Stomach (tissue), 19 donors: ENCODE measurements at regions of chr9 and their contacts with region 1.

Region 1: GRCh38 chr9:14198841-14199455 is 115.0 kb downstream of the NFIB start:
- DNase-seq: peak; percentile 60 to 64
- H3K4me3 ChIP-seq: no peak overlapping the region
- H3K27ac ChIP-seq: peak overlapping the region; percentile 26 to 73 (median 56)
- H3K4me1 ChIP-seq: peaks cover 13 to 86% (median 47%) of the 10 kb centered on the region in 4 donors
- H3K27me3 ChIP-seq: no peaks in the 10 kb centered on the region
- CTCF ChIP-seq: no peak
- EP300 ChIP-seq: no peak
- POLR2A ChIP-seq: no peak

Region 2: DNA sequence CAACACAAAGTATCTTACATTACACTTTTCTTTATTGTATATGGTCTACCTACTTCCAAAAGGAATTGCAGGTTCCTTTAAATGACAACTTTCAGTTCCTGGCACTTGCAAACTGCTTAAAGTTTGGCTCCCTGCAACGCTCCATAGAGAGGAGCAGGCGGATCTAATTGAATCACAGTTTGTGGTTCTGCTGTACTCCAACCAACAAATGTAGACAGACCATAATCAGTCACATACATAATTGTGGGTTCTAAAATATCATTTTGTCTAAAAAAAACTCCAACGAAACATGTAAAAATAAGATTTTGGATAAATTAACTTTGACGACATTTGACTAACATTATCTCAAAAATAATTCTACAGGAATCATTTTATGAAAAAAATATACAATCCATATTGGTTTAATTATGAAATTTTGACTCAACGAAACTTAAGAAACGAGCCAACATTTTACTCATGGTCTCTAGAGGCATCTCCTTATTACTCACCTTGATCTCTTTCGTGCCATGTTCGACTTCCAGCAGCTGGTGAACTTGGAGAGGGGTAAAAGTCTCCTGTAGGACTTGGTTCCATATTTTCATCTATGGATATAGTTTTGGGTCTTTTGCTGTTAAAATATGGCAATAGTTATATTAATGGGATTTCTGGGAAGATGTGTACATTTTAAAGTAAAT is 52.6 kb before region 1 on chr9:
- intact Hi-C with region 1: no loop called
- DNase-seq: no peak
- H3K4me3 ChIP-seq: no peak overlapping the region
- H3K27ac ChIP-seq: no peak overlapping the region
- H3K4me1 ChIP-seq: peaks cover 0 to 4% (median 1%) of the 10 kb centered on the region in 4 donors
- H3K27me3 ChIP-seq: no peaks in the 10 kb centered on the region
- CTCF ChIP-seq: no peak
- EP300 ChIP-seq: no peak
- POLR2A ChIP-seq: no peak

Region 3: GRCh38 chr9:14245901-14246525 is 47.1 kb after region 1 on chr9:
- intact Hi-C with region 1: loop called (anchors 10 kb)
- DNase-seq: no peak
- H3K4me3 ChIP-seq: no peak overlapping the region
- H3K27ac ChIP-seq: no peak overlapping the region
- H3K4me1 ChIP-seq: peaks cover 7 to 88% (median 41%) of the 10 kb centered on the region in 4 donors
- H3K27me3 ChIP-seq: no peaks in the 10 kb centered on the region
- CTCF ChIP-seq: no peak
- EP300 ChIP-seq: no peak
- POLR2A ChIP-seq: no peak

Region 4: DNA sequence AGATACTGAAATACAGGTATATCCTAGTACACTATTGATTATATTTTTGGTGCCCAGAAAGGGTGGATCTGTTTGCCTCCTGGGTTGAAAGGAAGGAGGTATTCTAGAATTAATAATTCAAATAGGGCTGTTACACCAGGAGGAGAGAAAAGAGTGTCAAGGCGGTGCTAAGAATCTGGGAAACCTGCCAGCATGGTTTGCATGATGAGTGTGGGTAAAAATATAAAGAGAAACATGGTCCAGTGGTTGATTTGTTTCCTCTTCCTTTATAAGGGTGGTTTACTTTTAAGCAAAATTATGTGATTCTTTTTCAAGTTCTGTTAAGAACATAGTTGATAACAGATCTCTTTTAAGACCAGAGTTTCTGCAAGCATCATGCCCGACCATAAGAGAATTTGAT is 184.3 kb after region 1 on chr9:
- intact Hi-C with region 1: no loop called
- DNase-seq: peak in 1 of 2 donors; percentile 62
- H3K4me3 ChIP-seq: no peak overlapping the region
- H3K27ac ChIP-seq: no peak overlapping the region
- H3K4me1 ChIP-seq: no peaks in the 10 kb centered on the region
- H3K27me3 ChIP-seq: no peaks in the 10 kb centered on the region
- CTCF ChIP-seq: no peak
- EP300 ChIP-seq: no peak
- POLR2A ChIP-seq: no peak